ENCODE measurements at regions of chr22 and their contacts with region 1.

Region 1: DNA sequence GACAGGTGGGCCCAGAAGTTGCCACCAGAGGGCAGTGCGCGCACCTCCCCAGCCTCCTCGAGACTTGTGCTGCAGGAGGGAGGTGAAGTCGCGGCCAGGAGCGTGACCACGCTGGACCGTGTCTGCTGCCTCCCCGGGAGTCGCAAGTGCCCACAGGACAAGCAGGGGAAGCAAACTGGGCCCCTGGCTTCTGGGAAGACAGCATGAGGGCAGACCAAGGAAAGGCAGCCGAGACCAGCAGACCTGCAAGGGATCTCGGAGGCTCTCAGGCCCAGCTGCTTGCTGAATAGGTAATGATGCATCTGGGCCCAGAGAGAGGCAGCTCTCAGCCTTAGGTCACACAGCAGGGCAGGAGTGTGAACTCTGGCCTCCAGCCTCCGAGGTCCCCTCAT is 17.0 kb upstream of the IL2RB start:
- DNase-seq: peak; percentile 76 to 88 (median 86)
- H3K4me3 ChIP-seq: no peak overlapping the region
- H3K27ac ChIP-seq: no peak overlapping the region
- H3K4me1 ChIP-seq: no peaks in the 10 kb centered on the region
- H3K27me3 ChIP-seq: no peaks in the 10 kb centered on the region
- CTCF ChIP-seq: peak; percentile 70 to 90 (median 89)
- EP300 ChIP-seq: no peak
- POLR2A ChIP-seq: peak; percentile 8

Region 2: GRCh38 chr22:37207048-37207821 is 40.6 kb after region 1 on chr22:
- intact Hi-C with region 1: loop called in 1 of 4 experiments (anchors 5 kb)
- DNase-seq: peak in 3 of 5 donors; percentile 14 to 28 (median 18)
- H3K4me3 ChIP-seq: no peak overlapping the region
- H3K27ac ChIP-seq: no peak overlapping the region
- H3K4me1 ChIP-seq: peaks cover 4% of the 10 kb centered on the region
- H3K27me3 ChIP-seq: no peaks in the 10 kb centered on the region
- CTCF ChIP-seq: no peak
- EP300 ChIP-seq: no peak
- POLR2A ChIP-seq: no peak

Region 3: DNA sequence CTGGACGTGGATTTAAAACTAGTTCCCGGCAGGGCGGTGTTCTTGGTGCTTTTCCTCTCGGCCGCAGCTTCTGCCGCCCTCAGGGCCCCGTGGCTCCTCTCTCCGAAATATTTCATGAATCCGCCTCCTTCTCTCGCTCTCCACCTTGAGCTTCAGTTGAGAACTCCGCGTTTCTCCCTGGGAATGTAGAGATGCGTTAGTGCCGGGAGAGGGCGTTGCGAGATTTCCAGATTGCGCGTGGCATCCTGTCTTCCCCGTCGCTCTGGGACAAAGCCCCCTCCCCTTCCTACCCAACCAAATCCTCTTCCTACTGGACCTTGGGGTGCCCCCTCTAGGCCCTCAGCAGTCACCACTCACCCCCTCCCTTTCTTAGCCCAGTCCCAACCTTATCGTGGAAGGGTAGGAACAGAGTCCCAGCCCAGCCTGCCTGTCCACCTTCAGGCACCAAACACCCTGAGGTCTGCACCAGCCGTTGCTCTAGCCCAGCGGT is 92.9 kb after region 1 on chr22:
- intact Hi-C with region 1: loop called in 1 of 4 experiments (anchors 10 kb)
- DNase-seq: peak in 1 of 5 donors; percentile 4
- H3K4me3 ChIP-seq: no peak overlapping the region
- H3K27ac ChIP-seq: no peak overlapping the region
- H3K4me1 ChIP-seq: no peaks in the 10 kb centered on the region
- H3K27me3 ChIP-seq: no peaks in the 10 kb centered on the region
- CTCF ChIP-seq: no peak
- EP300 ChIP-seq: no peak
- POLR2A ChIP-seq: no peak

Measured in ovary (tissue), 10 donors.